HepG2 (cell line): ENCODE measurements at regions of chr5 and their contacts with region 1.

Region 1: DNA sequence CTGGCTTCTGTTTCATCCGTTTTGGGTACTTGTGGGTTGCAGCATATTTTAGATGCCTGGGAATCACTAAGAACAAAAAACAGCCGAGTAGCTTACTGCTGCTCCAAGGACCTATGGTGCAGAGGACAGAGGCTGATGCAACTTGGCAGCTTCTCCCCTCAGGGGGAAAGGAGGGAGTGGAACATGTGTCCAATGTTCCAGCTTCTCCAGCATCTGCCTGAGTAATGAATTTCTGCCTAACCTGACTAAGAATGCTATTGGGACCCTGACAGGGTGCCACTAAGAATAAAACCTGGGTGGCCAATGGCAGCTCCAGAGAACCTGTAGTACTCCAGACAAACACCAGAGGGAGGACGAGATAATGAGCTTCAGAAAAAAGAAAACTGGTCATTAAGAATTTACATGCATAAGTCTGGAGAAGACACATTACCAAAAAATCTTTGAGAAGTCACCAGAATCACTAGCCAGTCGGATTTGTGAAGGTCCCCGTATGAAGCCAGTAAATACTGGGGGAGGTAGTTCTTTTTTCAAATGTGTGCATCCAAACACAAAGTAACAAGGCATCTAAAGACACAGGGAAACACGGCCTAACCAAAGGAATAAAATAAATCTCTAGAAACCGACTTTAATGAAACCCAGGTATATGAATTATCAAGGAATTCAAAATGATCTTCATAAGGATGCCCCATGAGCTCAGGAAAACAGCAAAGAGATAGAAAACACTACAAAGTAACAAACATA is 293.5 kb downstream of the HINT1 start:
- DNase-seq: peak; percentile 20
- ATAC-seq: peak; percentile 71
- H3K4me3 ChIP-seq: no peak overlapping the region
- H3K27ac ChIP-seq: no peak overlapping the region
- H3K4me1 ChIP-seq: no peaks in the 10 kb centered on the region
- H3K27me3 ChIP-seq: no peaks in the 10 kb centered on the region
- CTCF ChIP-seq: peak; percentile 54
- EP300 ChIP-seq: no peak
- POLR2A ChIP-seq: no peak
- RAD21 ChIP-seq: peak; percentile 26; the same call in 1 of the 2 replicates

Region 2: GRCh38 chr5:130893006-130893405 is 21.5 kb after region 1 on chr5:
- CTCF ChIA-PET with region 1: no interaction called
- POLR2A ChIA-PET with region 1: no interaction called
- in situ Hi-C with region 1: no loop called
- intact Hi-C with region 1: no loop called
- DNase-seq: no peak
- ATAC-seq: no peak
- H3K4me3 ChIP-seq: no peak overlapping the region
- H3K27ac ChIP-seq: no peak overlapping the region
- H3K4me1 ChIP-seq: no peaks in the 10 kb centered on the region
- H3K27me3 ChIP-seq: no peaks in the 10 kb centered on the region
- CTCF ChIP-seq: no peak
- EP300 ChIP-seq: no peak
- POLR2A ChIP-seq: no peak
- RAD21 ChIP-seq: no peak

Region 3: GRCh38 chr5:130912088-130912487 is 40.6 kb after region 1 on chr5:
- CTCF ChIA-PET with region 1: interaction called, 8 read pairs
- POLR2A ChIA-PET with region 1: no interaction called
- in situ Hi-C with region 1: no loop called
- intact Hi-C with region 1: loop called (anchors 1 kb)
- DNase-seq: no peak
- ATAC-seq: no peak
- H3K4me3 ChIP-seq: no peak overlapping the region
- H3K27ac ChIP-seq: no peak overlapping the region
- H3K4me1 ChIP-seq: no peaks in the 10 kb centered on the region
- H3K27me3 ChIP-seq: no peaks in the 10 kb centered on the region; a peak in 1 of 5 replicates
- CTCF ChIP-seq: no peak
- EP300 ChIP-seq: no peak
- POLR2A ChIP-seq: no peak
- RAD21 ChIP-seq: no peak

Region 4: DNA sequence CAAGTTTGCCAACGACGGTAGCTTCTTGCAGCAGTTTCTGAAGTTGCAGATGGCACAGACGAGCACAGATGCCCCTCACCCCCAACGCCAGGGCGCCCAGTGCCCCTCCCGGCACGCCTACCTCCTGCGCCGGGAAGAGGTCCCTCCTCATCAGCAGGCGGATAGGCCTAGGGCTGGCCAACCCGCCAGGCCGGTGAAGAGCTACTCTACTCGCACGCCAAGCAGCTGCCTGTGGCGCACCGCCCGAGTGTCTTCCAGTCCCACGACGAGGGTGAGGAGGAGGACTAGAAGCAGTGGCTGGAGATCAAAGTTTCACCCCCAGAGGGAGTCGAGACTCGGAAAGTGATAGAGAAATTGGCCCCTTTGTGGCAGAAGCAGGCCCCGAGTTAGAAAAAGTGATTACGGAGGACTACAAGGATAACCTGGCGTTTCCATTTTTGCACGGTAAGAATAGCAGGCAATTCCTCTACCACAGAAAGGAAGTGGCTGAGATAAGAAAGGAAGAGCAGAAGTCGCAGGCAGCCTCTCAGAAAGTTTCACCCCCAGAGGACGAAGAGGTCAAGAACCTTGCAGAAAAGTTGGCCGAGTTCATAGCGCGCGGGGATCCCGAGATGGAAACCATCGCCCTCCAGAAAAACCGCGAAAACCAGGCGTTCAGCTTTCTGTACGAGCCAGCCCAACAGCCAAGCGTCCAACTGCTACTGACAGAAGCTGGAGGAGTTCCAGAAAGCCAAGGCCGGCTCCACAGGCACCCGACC is 123.2 kb after region 1 on chr5:
- CTCF ChIA-PET with region 1: no interaction called
- POLR2A ChIA-PET with region 1: no interaction called
- in situ Hi-C with region 1: no loop called
- intact Hi-C with region 1: loop called (anchors 5 kb)
- DNase-seq: no peak
- ATAC-seq: no peak
- H3K4me3 ChIP-seq: no peak overlapping the region
- H3K27ac ChIP-seq: no peak overlapping the region
- H3K4me1 ChIP-seq: no peaks in the 10 kb centered on the region
- H3K27me3 ChIP-seq: no peaks in the 10 kb centered on the region
- CTCF ChIP-seq: no peak
- EP300 ChIP-seq: no peak
- POLR2A ChIP-seq: no peak
- RAD21 ChIP-seq: no peak

Region 5: DNA sequence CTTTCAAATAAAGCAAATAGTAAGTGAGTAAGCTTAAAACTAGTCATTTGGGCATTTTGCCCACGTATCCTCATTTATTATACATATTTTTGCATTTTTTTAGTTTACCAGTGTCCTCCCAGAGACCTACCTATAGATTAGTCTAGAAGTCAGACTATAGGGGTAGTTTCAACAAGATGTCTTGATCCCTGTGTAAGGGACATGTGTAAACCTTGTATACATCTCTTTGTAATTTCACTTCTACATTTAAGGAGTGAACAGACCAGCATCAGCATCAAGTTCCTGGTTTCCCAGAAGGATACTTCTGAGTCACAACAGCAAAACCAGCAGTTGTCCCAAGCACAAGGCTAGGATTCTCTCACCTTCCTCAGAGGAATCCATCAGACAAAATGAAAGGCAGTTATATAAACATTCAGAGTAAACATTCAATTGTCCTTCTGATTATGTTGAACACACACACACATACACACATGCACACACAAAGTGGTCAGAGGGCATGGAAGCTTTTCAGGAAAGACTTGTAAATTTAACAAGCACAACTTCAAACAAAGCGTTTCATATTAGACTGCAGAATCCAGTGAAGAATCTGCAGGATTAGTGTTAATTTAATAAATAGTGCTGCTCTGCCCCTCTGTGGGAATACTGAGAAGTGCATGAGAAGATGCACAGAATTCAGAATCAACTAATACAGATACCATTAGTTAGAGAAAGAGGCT is 238.2 kb after region 1 on chr5:
- CTCF ChIA-PET with region 1: interaction called, 21 read pairs
- POLR2A ChIA-PET with region 1: no interaction called
- in situ Hi-C with region 1: loop called (anchors 25 kb)
- intact Hi-C with region 1: no loop called
- DNase-seq: peak; percentile 17
- ATAC-seq: peak; percentile 80
- H3K4me3 ChIP-seq: no peak overlapping the region
- H3K27ac ChIP-seq: no peak overlapping the region
- H3K4me1 ChIP-seq: no peaks in the 10 kb centered on the region
- H3K27me3 ChIP-seq: no peaks in the 10 kb centered on the region
- CTCF ChIP-seq: peak; percentile 65
- EP300 ChIP-seq: no peak
- POLR2A ChIP-seq: no peak
- RAD21 ChIP-seq: peak; percentile 32; the same call in 1 of the 2 replicates

Region 6: DNA sequence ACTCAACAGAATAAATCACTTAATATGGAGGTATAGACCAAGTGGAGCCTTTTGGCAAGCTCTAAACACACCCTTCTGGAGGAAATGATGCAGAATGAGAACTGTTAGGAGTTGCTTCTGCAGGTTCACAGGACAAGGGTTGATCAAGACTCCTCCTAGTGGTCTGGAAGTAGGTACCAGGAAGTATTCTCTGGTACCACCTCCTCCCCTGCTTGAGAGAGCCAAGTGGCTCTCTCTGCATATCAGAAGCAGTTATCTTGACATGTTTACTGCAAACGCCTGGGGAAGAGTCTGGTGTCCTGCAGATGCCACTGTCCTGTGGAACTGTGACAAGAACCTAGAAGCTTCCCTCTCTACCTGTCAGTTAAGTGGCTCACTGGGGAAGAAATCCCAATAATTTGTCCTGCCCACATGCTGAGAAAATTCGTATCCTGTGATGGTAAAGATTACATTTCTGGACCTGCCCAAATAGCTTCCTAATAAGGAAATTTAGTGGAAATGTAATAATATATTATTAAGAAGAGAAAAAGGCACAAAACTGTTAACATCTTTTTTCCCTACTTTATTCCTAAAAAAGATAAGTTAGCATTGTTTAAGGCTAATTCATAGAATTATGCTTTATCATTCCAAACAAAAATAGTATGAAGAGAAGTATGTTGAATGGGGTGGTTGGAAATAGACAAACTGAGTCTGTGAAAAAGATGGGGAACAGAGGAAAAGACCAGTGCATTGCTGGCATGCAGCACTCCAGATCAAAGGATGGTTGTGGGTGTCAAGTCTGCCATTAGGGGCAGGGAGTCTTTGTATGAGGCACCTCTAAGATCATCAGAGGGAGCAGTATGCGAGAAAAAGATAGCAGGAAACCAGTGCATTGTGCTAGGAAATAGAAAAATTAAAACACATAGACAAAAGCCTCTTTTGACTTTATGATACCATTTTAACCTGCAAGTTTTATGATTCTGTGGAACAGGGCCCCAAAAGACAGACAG is 511.2 kb after region 1 on chr5:
- CTCF ChIA-PET with region 1: no interaction called
- POLR2A ChIA-PET with region 1: no interaction called
- in situ Hi-C with region 1: loop called (anchors 25 kb)
- intact Hi-C with region 1: no loop called
- DNase-seq: peak; percentile 66
- ATAC-seq: peak; percentile 74
- H3K4me3 ChIP-seq: no peak overlapping the region
- H3K27ac ChIP-seq: peak overlapping the region; percentile 7
- H3K4me1 ChIP-seq: peaks cover 76% of the 10 kb centered on the region
- H3K27me3 ChIP-seq: no peaks in the 10 kb centered on the region
- CTCF ChIP-seq: peak; percentile 69
- EP300 ChIP-seq: no peak
- POLR2A ChIP-seq: no peak
- RAD21 ChIP-seq: peak; percentile 57

Region 7: GRCh38 chr5:131417240-131417869 is 545.8 kb after region 1 on chr5:
- CTCF ChIA-PET with region 1: interaction called, 6 read pairs
- POLR2A ChIA-PET with region 1: no interaction called
- in situ Hi-C with region 1: no loop called
- intact Hi-C with region 1: loop called (anchors 1 kb)
- DNase-seq: peak; percentile 56
- ATAC-seq: peak; percentile 71
- H3K4me3 ChIP-seq: no peak overlapping the region
- H3K27ac ChIP-seq: no peak overlapping the region
- H3K4me1 ChIP-seq: no peaks in the 10 kb centered on the region
- H3K27me3 ChIP-seq: no peaks in the 10 kb centered on the region
- CTCF ChIP-seq: peak; percentile 79
- EP300 ChIP-seq: no peak
- POLR2A ChIP-seq: no peak
- RAD21 ChIP-seq: 0 out of 2 replicates have a peak, but pooled peaks have one; percentile 28

Region 8: DNA sequence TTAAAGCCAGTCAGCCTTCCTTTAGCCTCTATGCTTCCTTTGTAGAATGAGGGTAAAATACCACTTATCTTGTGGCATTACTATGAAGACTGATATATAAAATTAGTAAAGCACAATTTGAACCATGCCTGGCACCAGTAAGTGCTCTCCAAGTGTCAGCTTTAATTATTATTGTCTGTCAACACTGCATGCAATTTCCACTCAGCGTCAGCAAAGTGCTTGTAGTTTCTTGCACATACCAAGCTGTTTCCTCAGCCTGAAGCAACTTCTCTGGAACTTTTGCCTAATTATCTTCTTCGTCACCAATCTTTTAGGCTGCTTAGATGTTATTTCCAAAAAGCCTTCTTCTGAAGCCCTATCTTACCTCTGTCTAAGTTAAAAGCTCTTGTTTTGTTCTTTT is 569.7 kb after region 1 on chr5:
- CTCF ChIA-PET with region 1: no interaction called
- POLR2A ChIA-PET with region 1: no interaction called
- in situ Hi-C with region 1: no loop called
- intact Hi-C with region 1: no loop called
- DNase-seq: no peak
- ATAC-seq: no peak
- H3K4me3 ChIP-seq: no peak overlapping the region
- H3K27ac ChIP-seq: no peak overlapping the region
- H3K4me1 ChIP-seq: no peaks in the 10 kb centered on the region
- H3K27me3 ChIP-seq: no peaks in the 10 kb centered on the region
- CTCF ChIP-seq: no peak
- EP300 ChIP-seq: no peak
- POLR2A ChIP-seq: no peak
- RAD21 ChIP-seq: no peak